Astrocyte of the cerebellum (primary cell): ENCODE measurements at regions of chr1 and their contacts with region 1.

Region 1: DNA sequence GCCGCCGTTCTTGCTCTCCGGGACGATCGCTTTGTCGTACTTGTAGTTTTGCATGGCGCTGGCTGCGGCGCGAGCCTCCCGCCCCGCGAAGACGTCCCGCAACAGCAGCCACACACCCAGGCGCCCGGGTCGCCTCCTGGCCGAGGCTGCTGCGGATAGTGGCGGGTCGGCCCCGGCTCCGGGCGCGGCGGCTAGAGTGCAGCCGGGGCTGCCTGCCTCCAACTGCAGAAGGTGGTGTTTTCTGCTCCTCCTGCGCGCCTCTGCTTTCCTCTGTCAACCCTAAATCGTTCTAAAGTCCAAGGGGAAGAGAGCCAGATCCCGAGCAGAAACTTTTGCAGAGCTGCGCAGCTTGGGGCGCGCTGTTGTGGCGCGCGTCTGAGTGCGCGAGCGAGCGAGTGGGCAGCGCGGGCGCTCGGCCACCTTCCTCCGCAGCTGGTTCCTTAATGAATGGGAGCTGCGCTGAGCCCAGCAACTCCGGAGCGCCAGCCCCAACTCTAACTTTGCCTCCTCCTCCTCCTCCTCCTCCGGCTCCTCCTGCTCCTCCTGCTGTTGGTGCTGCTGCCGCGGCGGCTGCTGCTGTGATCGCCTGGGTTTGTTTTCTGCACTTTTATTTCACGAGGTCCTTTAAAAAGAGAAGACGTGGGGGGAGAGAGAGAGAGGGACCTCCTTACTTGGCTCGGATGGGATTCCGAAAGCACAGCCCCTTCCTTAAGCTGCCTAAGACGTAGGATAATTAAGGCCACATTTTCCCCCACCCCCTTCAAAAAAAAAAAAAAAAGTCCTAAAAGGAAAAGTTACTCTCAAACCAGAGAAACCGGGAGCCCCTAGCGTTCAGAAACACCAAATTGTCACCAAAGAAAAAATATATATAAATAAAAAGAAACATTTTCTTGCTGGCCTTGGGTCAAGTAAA is at the start of gene PLPP3:
- DNase-seq: peak; percentile 91
- H3K4me3 ChIP-seq: peak within 1 kb of the TSS; percentile 88
- CTCF ChIP-seq: peak; percentile 59

Region 2: GRCh38 chr1:55140546-55140983 is 1438.7 kb before region 1 on chr1:
- in situ Hi-C with region 1: loop called (anchors 25 kb)
- DNase-seq: peak; percentile 89
- H3K4me3 ChIP-seq: no peak overlapping the region
- CTCF ChIP-seq: peak; percentile 85

Region 3: GRCh38 chr1:57048856-57049255 is 469.6 kb after region 1 on chr1:
- in situ Hi-C with region 1: no loop called
- DNase-seq: no peak
- H3K4me3 ChIP-seq: no peak overlapping the region
- CTCF ChIP-seq: no peak